CD4-positive, alpha-beta memory T cell (primary cell): ENCODE measurements at regions of chr14 and their contacts with region 1.

Region 1: GRCh38 chr14:91323671-91324605 is 79.4 kb upstream of the GPR68 start:
- DNase-seq: peak; percentile 88 to 96 (median 91)
- H3K4me3 ChIP-seq: peak overlapping the region in 1 of 2 donors; percentile 32
- H3K4me3 Mint-ChIP-seq: peak overlapping the region; percentile 82 to 92 (median 84)
- H3K27ac ChIP-seq: peak overlapping the region; percentile 90
- H3K27ac Mint-ChIP-seq: peak overlapping the region; percentile 97 to 99 (median 99)
- H3K4me1 ChIP-seq: peaks cover 83% of the 10 kb centered on the region
- H3K4me1 Mint-ChIP-seq: peaks cover 35 to 85% (median 69%) of the 10 kb centered on the region in 4 donors
- H3K27me3 ChIP-seq: no peaks in the 10 kb centered on the region
- H3K27me3 Mint-ChIP-seq: no peaks in the 10 kb centered on the region

Region 2: DNA sequence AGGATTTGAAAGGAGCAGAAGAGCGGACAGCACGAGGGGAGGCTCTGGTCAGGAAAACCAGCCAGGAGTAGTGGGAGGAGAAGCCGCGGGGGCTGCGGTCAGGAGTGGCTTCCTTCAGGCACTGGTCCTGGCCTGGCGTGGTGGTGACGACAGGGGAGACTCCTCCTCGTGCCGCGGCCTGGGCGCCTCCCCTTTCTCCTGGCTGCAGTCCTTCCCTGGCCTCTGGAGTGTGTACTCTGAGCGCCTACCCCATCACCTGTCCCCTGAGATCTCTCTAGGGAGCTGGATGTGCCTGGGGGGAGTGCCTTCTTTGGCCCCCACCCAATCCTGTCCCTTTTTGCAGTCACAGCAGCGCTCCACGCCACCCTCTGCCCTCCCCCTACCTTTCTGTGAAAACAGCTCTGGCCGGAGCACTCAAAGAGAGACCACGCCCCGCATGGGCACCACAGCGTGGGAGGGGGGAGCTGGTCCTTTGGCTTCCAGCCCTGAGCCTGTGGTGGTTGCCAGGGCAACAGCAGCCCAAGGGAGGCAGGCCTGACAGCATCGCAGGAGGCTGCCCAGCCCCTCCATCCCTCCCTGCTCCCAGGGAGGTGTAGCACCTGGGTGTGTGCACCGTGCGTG is 801.3 kb before region 1 on chr14:
- CTCF ChIA-PET with region 1: no interaction called
- POLR2A ChIA-PET with region 1: no interaction called
- intact Hi-C with region 1: no loop called
- DNase-seq: no peak
- H3K4me3 ChIP-seq: no peak overlapping the region
- H3K4me3 Mint-ChIP-seq: no peak overlapping the region
- H3K27ac ChIP-seq: no peak overlapping the region
- H3K27ac Mint-ChIP-seq: no peak overlapping the region
- H3K4me1 ChIP-seq: no peaks in the 10 kb centered on the region
- H3K4me1 Mint-ChIP-seq: no peaks in the 10 kb centered on the region
- H3K27me3 ChIP-seq: no peaks in the 10 kb centered on the region
- H3K27me3 Mint-ChIP-seq: peaks cover 2 to 6% of the 10 kb centered on the region in 2 donors

Region 3: GRCh38 chr14:90714811-90715210 is 609.1 kb before region 1 on chr14:
- CTCF ChIA-PET with region 1: no interaction called
- POLR2A ChIA-PET with region 1: no interaction called
- intact Hi-C with region 1: no loop called
- DNase-seq: no peak
- H3K4me3 ChIP-seq: no peak overlapping the region
- H3K4me3 Mint-ChIP-seq: no peak overlapping the region
- H3K27ac ChIP-seq: no peak overlapping the region
- H3K27ac Mint-ChIP-seq: no peak overlapping the region
- H3K4me1 ChIP-seq: no peaks in the 10 kb centered on the region
- H3K4me1 Mint-ChIP-seq: no peaks in the 10 kb centered on the region
- H3K27me3 ChIP-seq: no peaks in the 10 kb centered on the region
- H3K27me3 Mint-ChIP-seq: peaks cover 0 to 2% of the 10 kb centered on the region in 2 donors

Region 4: DNA sequence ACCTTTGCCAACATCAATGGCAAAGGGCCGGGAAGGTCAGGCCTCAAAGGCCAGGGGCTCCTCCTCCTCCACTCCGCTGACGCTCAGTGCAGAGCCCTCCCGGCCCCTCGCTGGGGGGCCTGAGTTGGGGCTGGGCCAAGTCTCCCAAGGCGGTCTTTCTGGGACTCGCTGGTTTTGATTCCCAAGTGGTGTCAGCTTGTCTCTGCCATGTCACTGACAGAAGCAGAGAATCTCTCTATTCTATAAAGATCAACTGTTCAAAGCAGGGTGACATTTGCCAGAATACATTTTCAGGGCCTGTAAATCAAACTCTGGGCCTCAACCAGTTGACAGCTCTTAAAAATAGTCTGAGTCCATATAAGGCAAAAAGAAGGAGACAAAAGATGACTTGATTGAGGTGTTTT is 17.8 kb after region 1 on chr14:
- CTCF ChIA-PET with region 1: interaction called, 36 read pairs
- POLR2A ChIA-PET with region 1: interaction called, 11 read pairs
- intact Hi-C with region 1: no loop called
- DNase-seq: no peak
- H3K4me3 ChIP-seq: no peak overlapping the region
- H3K4me3 Mint-ChIP-seq: no peak overlapping the region
- H3K27ac ChIP-seq: no peak overlapping the region
- H3K27ac Mint-ChIP-seq: peak overlapping the region in 2 of 7 donors; percentile 23 to 64
- H3K4me1 ChIP-seq: peaks cover 27% of the 10 kb centered on the region
- H3K4me1 Mint-ChIP-seq: peaks cover 12 to 41% (median 20%) of the 10 kb centered on the region in 4 donors
- H3K27me3 ChIP-seq: no peaks in the 10 kb centered on the region
- H3K27me3 Mint-ChIP-seq: no peaks in the 10 kb centered on the region

Region 5: DNA sequence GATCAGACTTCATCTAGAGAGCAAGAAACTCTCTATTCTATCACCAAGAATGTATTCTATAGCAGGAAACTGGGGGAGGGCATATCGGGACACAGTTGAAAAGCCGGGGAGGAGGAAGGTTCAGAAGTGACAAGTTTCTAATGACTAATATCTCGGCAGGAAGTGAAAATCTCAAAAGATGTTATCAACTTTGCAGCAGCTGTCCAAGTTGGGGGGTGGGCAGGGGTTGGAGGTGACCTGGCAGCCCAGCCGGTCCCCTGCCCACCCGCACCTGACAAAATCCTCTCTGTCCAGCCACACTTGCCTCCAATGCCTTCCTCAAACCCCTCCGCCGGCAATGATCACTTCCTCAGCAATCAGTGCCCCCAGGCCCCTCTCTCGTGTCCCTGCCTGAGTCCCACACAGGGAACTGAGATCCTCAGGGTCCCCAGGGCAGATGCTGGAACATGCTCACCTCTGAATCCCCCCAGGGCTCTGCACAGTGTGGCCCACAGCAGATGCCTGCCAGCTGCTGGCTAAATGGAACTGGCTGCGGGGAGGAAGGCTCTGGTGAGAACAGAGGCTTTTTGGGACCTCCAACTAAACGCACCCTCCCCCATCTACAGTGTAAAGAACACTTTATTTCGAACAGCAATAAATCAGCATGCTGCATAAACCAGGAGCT is 49.8 kb after region 1 on chr14:
- CTCF ChIA-PET with region 1: interaction called, 5 read pairs
- POLR2A ChIA-PET with region 1: interaction called, 33 read pairs
- intact Hi-C with region 1: loop called (anchors 1 kb)
- DNase-seq: peak; percentile 54 to 89 (median 60)
- H3K4me3 ChIP-seq: peak overlapping the region; percentile 46 to 50
- H3K4me3 Mint-ChIP-seq: peak overlapping the region; percentile 78 to 94 (median 84)
- H3K27ac ChIP-seq: peak overlapping the region; percentile 79
- H3K27ac Mint-ChIP-seq: peak overlapping the region; percentile 93 to 98 (median 96)
- H3K4me1 ChIP-seq: peaks cover 99% of the 10 kb centered on the region
- H3K4me1 Mint-ChIP-seq: peaks cover 78 to 100% (median 90%) of the 10 kb centered on the region in 4 donors
- H3K27me3 ChIP-seq: no peaks in the 10 kb centered on the region
- H3K27me3 Mint-ChIP-seq: no peaks in the 10 kb centered on the region

Region 6: GRCh38 chr14:91402771-91403600 is 79.0 kb after region 1 on chr14:
- CTCF ChIA-PET with region 1: interaction called, 38 read pairs
- POLR2A ChIA-PET with region 1: interaction called, 12 read pairs
- intact Hi-C with region 1: no loop called
- DNase-seq: peak in 1 of 5 donors; percentile 38
- H3K4me3 ChIP-seq: peak overlapping the region in 1 of 2 donors; percentile 5
- H3K4me3 Mint-ChIP-seq: peak overlapping the region; percentile 54 to 82 (median 79)
- H3K27ac ChIP-seq: peak overlapping the region; percentile 94
- H3K27ac Mint-ChIP-seq: peak overlapping the region; percentile 94 to 99 (median 95)
- H3K4me1 ChIP-seq: peaks cover 97% of the 10 kb centered on the region
- H3K4me1 Mint-ChIP-seq: peaks cover 62 to 97% (median 84%) of the 10 kb centered on the region in 4 donors
- H3K27me3 ChIP-seq: no peaks in the 10 kb centered on the region
- H3K27me3 Mint-ChIP-seq: no peaks in the 10 kb centered on the region

Region 7: DNA sequence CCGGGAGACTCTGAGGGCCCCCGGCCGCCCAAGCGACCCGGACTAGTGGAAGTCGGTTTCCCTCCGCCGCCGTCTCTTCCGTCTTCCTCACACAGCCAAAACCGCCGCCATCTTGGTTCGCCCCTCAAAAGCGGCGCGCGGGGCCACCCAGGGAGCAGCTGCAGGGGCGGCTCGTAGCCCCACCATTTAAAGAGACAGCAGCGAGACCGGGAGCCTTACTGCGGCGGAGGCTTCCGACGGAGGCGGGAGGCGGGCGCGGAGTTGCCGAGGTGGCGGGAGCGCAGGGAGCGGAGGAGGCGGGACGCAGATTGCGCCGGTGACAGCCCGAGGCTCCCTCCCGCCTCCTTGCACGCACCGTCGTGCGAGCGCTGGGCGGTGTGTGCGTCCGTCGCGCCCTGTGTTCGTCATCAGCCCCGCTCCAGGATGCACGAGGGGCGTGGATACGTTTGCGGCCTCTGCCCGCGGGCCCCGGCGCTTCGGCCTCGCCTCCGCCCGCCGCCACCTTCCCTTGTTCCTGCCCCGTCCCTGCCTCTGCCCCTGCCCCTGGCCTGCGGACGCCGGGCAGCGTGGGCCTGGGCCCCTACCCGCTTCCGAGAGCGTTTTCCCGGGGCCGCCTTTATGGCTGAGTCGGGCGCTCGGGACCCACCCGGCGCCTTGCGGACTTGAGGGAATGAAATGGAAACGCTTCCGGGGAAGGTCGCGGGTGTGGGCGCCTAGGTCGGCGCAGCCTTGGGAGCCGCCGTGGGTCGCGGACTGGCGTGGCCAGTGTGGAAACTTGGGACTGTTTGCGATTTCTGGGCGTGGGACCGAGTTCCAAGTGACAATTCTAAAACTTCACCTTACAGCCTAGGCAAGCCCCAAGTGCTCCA is 186.5 kb after region 1 on chr14 and contains the start of gene PPP4R3A:
- CTCF ChIA-PET with region 1: interaction called, 4 read pairs
- POLR2A ChIA-PET with region 1: no interaction called
- intact Hi-C with region 1: loop called (anchors 1 kb)
- DNase-seq: peak; percentile 93 to 95 (median 95)
- H3K4me3 ChIP-seq: peak within 1 kb of the TSS; percentile 59 to 88
- H3K4me3 Mint-ChIP-seq: peak within 1 kb of the TSS; percentile 97 to 100 (median 100)
- H3K27ac ChIP-seq: peak within 1 kb of the TSS; percentile 99
- H3K27ac Mint-ChIP-seq: peak within 1 kb of the TSS; percentile 99 to 100 (median 100)
- H3K4me1 ChIP-seq: peaks cover 37% of the 10 kb centered on the region
- H3K4me1 Mint-ChIP-seq: peaks cover 21 to 44% (median 29%) of the 10 kb centered on the region in 4 donors
- H3K27me3 ChIP-seq: no peaks in the 10 kb centered on the region
- H3K27me3 Mint-ChIP-seq: no peaks in the 10 kb centered on the region
- total RNA-seq, gene PPP4R3A: 162 to 169 TPM